ENCODE measurements at regions of chr16 and their contacts with region 1.

Region 1: GRCh38 chr16:10964039-10964890 is 19.9 kb downstream of the CLEC16A start:
- DNase-seq: peak; percentile 77
- H3K4me3 Mint-ChIP-seq: peak overlapping the region; percentile 51
- H3K27ac Mint-ChIP-seq: peak overlapping the region; percentile 94
- H3K4me1 Mint-ChIP-seq: peaks cover 67% of the 10 kb centered on the region
- H3K27me3 Mint-ChIP-seq: no peaks in the 10 kb centered on the region

Region 2: GRCh38 chr16:11025120-11025531 is 60.9 kb after region 1 on chr16:
- intact Hi-C with region 1: loop called (anchors 2 kb)
- DNase-seq: no peak
- H3K4me3 Mint-ChIP-seq: no peak overlapping the region
- H3K27ac Mint-ChIP-seq: peak overlapping the region; percentile 92
- H3K4me1 Mint-ChIP-seq: peaks cover 42% of the 10 kb centered on the region
- H3K27me3 Mint-ChIP-seq: no peaks in the 10 kb centered on the region

Region 3: GRCh38 chr16:11094072-11094856 is 130.0 kb after region 1 on chr16:
- intact Hi-C with region 1: loop called (anchors 2 kb)
- DNase-seq: peak; percentile 67
- H3K4me3 Mint-ChIP-seq: peak overlapping the region; percentile 50
- H3K27ac Mint-ChIP-seq: peak overlapping the region; percentile 98
- H3K4me1 Mint-ChIP-seq: peaks cover 75% of the 10 kb centered on the region
- H3K27me3 Mint-ChIP-seq: no peaks in the 10 kb centered on the region

Region 4: DNA sequence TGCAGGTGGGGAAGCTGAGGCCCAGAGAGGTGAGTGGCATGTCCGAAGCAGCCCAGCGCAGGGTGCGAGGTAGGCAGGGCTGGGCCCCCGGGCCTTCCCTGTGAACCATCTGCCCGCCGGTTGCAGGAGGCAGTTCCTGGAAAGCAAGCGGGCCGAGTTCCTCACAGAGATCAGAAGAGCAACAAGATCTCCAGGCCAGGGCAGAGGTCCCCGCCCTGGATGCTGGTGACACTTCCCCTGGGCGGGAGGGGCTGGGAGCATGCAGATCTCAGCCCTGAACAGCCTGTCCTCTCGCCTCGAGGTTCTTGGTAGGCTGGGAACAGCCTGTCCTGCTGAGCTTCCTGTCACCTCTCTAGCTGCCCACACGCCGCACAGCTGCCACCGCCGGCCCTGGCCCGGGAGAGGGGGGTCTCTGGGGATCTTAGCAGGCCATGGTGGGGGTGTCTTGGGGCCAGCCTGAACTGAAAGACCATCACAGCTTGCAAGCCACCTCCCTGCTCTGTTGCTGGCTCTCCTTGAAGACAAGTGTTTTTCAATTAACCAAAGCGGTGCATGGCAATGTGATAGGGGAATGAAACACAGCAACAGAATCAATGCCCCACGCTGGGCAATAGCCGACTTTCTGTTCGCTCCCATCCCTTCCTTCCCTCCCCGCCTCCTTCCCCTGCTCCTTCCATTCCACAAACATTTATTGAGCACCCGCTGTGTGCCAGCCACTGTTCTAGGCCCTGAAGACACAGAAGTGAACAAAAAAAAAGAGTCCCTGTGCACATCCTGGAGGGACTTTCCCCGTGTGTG is 260.0 kb after region 1 on chr16:
- intact Hi-C with region 1: loop called (anchors 1 kb)
- DNase-seq: peak; percentile 70
- H3K4me3 Mint-ChIP-seq: peak overlapping the region; percentile 76
- H3K27ac Mint-ChIP-seq: peak overlapping the region; percentile 100
- H3K4me1 Mint-ChIP-seq: peaks cover 50% of the 10 kb centered on the region
- H3K27me3 Mint-ChIP-seq: no peaks in the 10 kb centered on the region

Region 5: DNA sequence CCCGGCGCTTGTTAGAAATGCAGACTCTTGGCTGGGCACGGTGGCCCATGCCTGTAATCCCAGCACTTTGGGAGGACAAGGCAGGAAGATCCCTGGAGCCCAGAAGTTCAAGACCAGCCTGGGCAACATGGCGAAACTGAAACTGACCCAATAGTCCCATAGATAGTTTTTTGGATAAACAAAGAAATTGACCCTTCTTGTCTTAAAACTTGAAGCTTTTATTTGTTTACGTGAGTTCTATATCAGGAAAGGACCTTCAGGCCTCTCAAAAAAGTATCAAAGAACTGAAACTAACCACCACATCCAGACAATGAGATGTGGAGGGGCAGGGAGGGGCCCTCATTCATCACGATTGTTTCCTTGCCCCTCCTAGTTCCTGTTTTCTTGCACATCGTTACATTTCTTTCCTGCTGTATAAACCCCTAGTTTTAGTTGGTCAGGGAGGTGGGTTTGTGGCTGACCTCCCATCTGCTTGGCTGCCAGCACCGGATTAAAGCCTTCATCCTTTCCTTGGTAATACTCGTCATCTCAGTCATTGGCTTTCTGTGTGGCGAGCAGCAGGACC is 346.8 kb after region 1 on chr16:
- intact Hi-C with region 1: loop called (anchors 2 kb)
- DNase-seq: peak; percentile 65
- H3K4me3 Mint-ChIP-seq: peak overlapping the region; percentile 30
- H3K27ac Mint-ChIP-seq: peak overlapping the region; percentile 80
- H3K4me1 Mint-ChIP-seq: peaks cover 38% of the 10 kb centered on the region
- H3K27me3 Mint-ChIP-seq: no peaks in the 10 kb centered on the region

Region 6: DNA sequence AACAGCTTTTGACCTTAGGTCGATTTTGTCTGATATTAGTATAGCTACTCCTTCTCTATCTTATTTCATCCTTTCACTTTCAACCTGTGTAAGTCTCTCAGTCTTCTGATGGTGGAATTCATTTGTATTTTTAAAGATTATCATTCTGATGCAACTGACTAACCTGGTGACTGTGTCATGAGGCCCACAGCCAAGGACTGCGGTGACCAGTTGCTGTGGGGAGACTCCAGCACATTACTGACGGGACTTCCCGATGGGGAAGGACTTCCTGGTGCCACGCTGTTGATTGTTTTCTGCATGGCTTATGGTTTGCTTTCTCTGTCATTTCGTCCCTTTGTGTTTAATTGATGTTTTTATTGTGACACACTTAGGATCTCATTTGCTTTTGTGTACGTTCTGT is 415.2 kb after region 1 on chr16:
- intact Hi-C with region 1: loop called (anchors 2 kb)
- DNase-seq: no peak
- H3K4me3 Mint-ChIP-seq: no peak overlapping the region
- H3K27ac Mint-ChIP-seq: peak overlapping the region; percentile 74
- H3K4me1 Mint-ChIP-seq: peaks cover 26% of the 10 kb centered on the region
- H3K27me3 Mint-ChIP-seq: no peaks in the 10 kb centered on the region

Region 7: GRCh38 chr16:11783319-11784037 is 819.2 kb after region 1 on chr16:
- intact Hi-C with region 1: loop called (anchors 5 kb)
- DNase-seq: peak; percentile 53
- H3K4me3 Mint-ChIP-seq: peak overlapping the region; percentile 80
- H3K27ac Mint-ChIP-seq: peak overlapping the region; percentile 99
- H3K4me1 Mint-ChIP-seq: peaks cover 52% of the 10 kb centered on the region
- H3K27me3 Mint-ChIP-seq: no peaks in the 10 kb centered on the region